ENCODE measurements at regions of chr10 and their contacts with region 1.

Region 1: GRCh38 chr10:101031128-101031795 is at the starts of genes PDZD7 and SFXN3:
- DNase-seq: peak; percentile 97
- ATAC-seq: peak; percentile 90
- H3K4me3 Mint-ChIP-seq: peak within 1 kb of the TSS; percentile 79
- H3K27ac Mint-ChIP-seq: peak within 1 kb of the TSS; percentile 90
- H3K4me1 Mint-ChIP-seq: peaks cover 20% of the 10 kb centered on the region
- H3K27me3 Mint-ChIP-seq: peaks cover 17% of the 10 kb centered on the region
- total RNA-seq, gene PDZD7: 0.47 to 0.50 TPM
- total RNA-seq, gene SFXN3: 24.7 to 24.8 TPM

Region 2: DNA sequence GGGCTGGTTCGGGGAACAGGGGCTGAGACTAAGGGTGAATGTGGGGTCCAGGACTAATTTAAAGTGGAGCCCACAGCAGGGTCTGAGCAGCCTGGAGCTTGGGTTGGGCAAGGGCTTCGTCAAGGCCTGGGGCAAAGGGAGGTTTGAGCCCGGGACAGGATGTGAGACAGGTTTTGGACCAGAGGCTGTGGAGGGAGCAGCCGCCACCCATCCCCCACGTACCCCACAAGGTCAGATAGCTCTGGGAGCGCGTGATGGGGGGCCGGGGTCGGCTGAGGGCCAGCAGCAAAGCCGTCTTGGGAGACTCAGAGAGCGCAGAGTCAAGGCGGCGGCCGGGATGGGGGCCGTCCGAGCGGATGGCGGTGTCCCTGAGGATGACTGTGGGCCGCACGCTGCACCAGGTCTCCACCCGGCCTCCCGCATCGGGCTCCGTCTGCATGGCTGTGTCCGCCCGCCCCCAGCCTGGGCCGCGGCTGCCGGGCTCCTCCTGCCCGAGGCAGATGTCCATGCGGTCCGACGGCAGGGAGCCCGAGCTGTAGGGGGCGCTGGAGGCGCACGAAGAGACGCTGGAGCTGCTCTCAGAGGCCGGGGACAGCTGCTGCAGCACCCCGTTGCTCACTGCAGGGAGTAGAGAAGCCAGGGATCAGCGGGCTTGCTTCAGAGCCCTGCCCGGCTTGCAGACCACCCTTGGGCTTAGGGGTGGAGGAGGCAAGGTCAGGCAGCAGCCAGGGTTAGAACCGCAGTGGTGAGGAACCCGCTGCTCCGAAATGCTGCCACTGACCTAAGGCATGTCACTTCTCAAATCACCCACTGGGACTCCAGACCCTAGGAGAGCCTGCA is 12.4 kb before region 1 on chr10:
- CTCF ChIA-PET with region 1: interaction called, 169 read pairs
- POLR2A ChIA-PET with region 1: no interaction called
- DNase-seq: peak; percentile 83
- ATAC-seq: peak; percentile 90
- H3K4me3 Mint-ChIP-seq: no peak overlapping the region
- H3K27ac Mint-ChIP-seq: no peak overlapping the region
- H3K4me1 Mint-ChIP-seq: peaks cover 10% of the 10 kb centered on the region
- H3K27me3 Mint-ChIP-seq: peaks cover 43% of the 10 kb centered on the region

Region 3: DNA sequence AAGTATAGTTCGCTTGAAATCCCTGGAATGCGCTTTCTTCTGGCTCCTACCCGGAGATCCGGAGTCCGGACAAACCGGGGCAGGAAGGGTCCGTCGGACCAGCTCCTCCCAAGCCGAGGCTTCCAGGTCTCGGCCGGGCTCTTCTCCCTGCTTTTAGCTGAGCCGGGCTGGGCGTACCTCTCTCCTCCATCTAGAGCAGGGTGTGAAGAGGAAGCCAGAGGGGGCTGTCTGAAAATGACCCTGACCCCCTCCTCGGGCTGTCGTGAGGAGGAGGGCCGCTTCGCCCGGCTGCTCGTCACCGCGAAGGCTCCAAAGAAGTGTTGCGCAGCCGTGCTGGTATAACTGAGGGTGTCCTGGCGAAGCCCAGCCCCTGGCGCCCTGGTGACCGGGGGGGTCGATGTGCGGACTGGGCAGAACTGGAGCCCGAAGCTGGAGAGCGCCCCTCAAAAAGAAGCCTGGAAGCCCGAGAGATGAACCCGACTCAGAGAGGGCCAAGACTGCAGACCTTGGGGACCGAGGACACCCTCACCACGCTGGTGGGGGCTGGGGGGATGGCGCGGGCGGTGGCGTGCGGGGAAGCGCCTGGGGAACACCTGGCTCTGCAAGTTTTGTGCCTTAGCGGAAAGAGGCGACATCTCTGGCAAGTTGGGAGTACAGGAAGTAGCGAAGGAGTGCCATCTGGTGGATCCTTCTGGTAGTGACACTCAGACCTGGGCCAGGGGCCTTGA is 36.3 kb after region 1 on chr10:
- CTCF ChIA-PET with region 1: interaction called, 14 read pairs
- POLR2A ChIA-PET with region 1: no interaction called
- DNase-seq: peak; percentile 85
- ATAC-seq: peak; percentile 70
- H3K4me3 Mint-ChIP-seq: peak overlapping the region; percentile 76
- H3K27ac Mint-ChIP-seq: no peak overlapping the region
- H3K4me1 Mint-ChIP-seq: peaks cover 32% of the 10 kb centered on the region
- H3K27me3 Mint-ChIP-seq: peaks cover 52% of the 10 kb centered on the region

Measured in activated CD8-positive, alpha-beta T cell treated with anti-CD3 and anti-CD28 coated beads, Interleukin-2, amount 10 ng/mL, durations not matched to agents 7 days and 5 days (primary cell).